CD4-positive, alpha-beta memory T cell (primary cell): ENCODE measurements at regions of chr18 and their contacts with region 1.

Region 1: DNA sequence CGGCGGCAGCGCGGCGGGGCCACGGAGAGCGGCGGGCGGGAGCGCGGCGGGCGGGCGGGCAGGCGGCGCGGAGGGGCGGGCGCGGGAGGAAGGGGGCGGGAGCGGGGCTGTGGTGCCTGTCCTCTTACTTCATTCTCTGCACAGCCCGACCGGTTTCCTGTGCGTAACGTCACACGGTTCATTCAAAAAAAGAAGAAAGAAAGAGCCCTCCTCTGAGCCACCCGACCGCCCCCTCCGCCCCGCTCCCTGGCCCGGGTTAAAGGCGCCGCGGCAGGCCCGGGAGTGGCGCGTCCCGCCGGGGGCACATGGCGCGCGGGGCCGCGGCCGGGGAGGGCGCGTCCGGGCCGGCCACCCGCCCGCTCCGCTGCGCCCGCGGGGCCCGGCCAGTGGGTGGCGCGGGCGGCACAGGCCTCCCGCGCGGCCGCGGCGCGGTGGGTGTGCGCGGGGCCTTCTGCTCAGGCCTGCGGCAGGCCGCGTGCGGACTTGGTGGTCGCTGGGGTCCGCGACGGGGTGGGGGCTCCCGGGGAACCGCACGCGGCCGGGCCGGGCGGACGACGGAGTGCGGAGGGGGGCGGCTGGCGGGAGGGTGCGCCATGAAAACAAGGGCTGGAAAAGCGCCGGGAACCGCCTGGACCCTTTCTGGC is 599 bp upstream of the BCL2 start:
- DNase-seq: peak; percentile 88 to 95 (median 91)
- H3K4me3 ChIP-seq: peak overlapping the region in 1 of 2 donors; percentile 48
- H3K4me3 Mint-ChIP-seq: peak overlapping the region; percentile 86 to 99 (median 90)
- H3K27ac ChIP-seq: peak overlapping the region; percentile 58
- H3K27ac Mint-ChIP-seq: peak overlapping the region; percentile 91 to 97 (median 95)
- H3K4me1 ChIP-seq: peaks cover 32% of the 10 kb centered on the region
- H3K4me1 Mint-ChIP-seq: peaks cover 18 to 65% (median 28%) of the 10 kb centered on the region in 4 donors
- H3K27me3 ChIP-seq: no peaks in the 10 kb centered on the region
- H3K27me3 Mint-ChIP-seq: no peaks in the 10 kb centered on the region

Region 2: DNA sequence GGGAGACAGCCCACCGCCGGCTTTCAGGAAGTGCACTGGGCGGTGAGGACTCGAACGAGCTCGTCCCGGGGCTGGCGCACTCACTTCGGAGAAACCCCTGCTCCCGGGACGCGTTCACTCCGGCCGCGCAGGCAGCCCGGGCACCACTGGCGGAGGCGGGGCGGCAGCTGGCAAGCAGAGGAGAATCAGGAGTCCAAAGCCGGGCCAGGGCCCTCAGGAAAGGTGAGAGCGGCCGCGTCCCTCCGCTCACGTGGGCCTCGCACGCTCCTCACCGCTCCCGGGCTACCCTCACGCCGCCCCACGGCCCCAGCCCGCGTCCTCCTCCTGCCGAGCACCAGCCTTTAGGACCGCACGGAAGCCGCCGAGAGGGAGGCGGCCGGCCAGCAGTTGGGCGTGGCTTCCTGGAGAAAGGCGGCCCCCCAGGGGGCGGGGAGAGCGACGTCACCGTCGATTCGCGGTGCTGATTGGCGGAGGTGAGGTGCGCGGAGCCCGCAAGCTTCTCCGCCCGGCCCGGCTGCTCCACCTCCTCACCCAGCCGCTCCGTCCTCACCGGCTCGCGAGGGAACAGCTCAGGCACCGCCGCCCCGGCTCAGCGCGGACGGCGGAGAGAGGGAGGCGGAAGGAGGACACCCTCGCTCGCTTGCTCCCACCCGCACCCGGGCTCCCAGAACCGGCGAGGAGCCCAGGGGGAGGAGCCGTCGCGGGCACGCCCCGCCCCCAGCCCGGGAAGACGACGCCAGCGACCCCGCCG is 797.5 kb before region 1 on chr18 and contains the start of gene ZCCHC2:
- CTCF ChIA-PET with region 1: no interaction called
- POLR2A ChIA-PET with region 1: interaction called, 5 read pairs
- intact Hi-C with region 1: loop called (anchors 5 kb)
- DNase-seq: peak; percentile 97 to 100 (median 98)
- H3K4me3 ChIP-seq: peak within 1 kb of the TSS; percentile 38 to 98
- H3K4me3 Mint-ChIP-seq: peak within 1 kb of the TSS; percentile 90 to 99 (median 96)
- H3K27ac ChIP-seq: peak within 1 kb of the TSS; percentile 93
- H3K27ac Mint-ChIP-seq: peak within 1 kb of the TSS; percentile 80 to 96 (median 87)
- H3K4me1 ChIP-seq: peaks cover 34% of the 10 kb centered on the region
- H3K4me1 Mint-ChIP-seq: peaks cover 21 to 45% (median 32%) of the 10 kb centered on the region in 4 donors
- H3K27me3 ChIP-seq: no peaks in the 10 kb centered on the region
- H3K27me3 Mint-ChIP-seq: no peaks in the 10 kb centered on the region
- total RNA-seq, gene ZCCHC2: 51.7 to 52.2 TPM

Region 3: DNA sequence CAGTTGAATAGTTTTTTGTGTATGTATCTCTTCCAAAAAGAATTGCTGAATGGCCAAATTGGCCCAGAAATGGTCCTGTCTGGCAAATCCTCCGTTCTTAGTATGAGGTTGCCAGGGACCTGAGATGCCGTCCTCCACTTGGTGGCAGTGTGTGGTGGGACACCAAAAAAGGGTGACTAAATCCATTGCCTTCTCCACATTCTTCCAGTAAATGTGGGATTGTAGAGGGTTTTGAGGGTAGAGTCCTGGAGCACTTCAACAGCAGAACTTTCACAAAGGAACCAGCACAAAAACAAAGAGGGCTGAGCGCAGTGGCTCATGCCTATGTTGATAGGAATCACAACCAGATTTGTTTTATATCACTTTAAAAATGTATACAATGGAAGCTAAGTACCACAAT is 200.5 kb before region 1 on chr18:
- CTCF ChIA-PET with region 1: interaction called, 175 read pairs
- POLR2A ChIA-PET with region 1: no interaction called
- intact Hi-C with region 1: no loop called
- DNase-seq: no peak
- H3K4me3 ChIP-seq: no peak overlapping the region
- H3K4me3 Mint-ChIP-seq: no peak overlapping the region
- H3K27ac ChIP-seq: no peak overlapping the region
- H3K27ac Mint-ChIP-seq: peak overlapping the region in 1 of 7 donors; percentile 82
- H3K4me1 ChIP-seq: no peaks in the 10 kb centered on the region
- H3K4me1 Mint-ChIP-seq: peaks cover 3 to 9% (median 4%) of the 10 kb centered on the region in 4 donors
- H3K27me3 ChIP-seq: no peaks in the 10 kb centered on the region
- H3K27me3 Mint-ChIP-seq: peaks cover 0 to 3% of the 10 kb centered on the region in 2 donors

Region 4: GRCh38 chr18:63161761-63162195 is 158.4 kb before region 1 on chr18:
- CTCF ChIA-PET with region 1: interaction called, 139 read pairs
- POLR2A ChIA-PET with region 1: interaction called, 195 read pairs
- intact Hi-C with region 1: loop called (anchors 1 kb)
- DNase-seq: peak; percentile 79 to 97 (median 86)
- H3K4me3 ChIP-seq: peak overlapping the region; percentile 37 to 38
- H3K4me3 Mint-ChIP-seq: peak overlapping the region; percentile 68 to 93 (median 90)
- H3K27ac ChIP-seq: peak overlapping the region; percentile 97
- H3K27ac Mint-ChIP-seq: peak overlapping the region; percentile 93 to 100 (median 99)
- H3K4me1 ChIP-seq: peaks cover 90% of the 10 kb centered on the region
- H3K4me1 Mint-ChIP-seq: peaks cover 77 to 96% (median 85%) of the 10 kb centered on the region in 4 donors
- H3K27me3 ChIP-seq: no peaks in the 10 kb centered on the region
- H3K27me3 Mint-ChIP-seq: no peaks in the 10 kb centered on the region

Region 5: GRCh38 chr18:63216516-63217311 is 103.5 kb before region 1 on chr18:
- CTCF ChIA-PET with region 1: interaction called, 13 read pairs
- POLR2A ChIA-PET with region 1: interaction called, 20 read pairs
- intact Hi-C with region 1: no loop called
- DNase-seq: peak; percentile 38 to 60 (median 50)
- H3K4me3 ChIP-seq: peak overlapping the region in 1 of 2 donors; percentile 21
- H3K4me3 Mint-ChIP-seq: peak overlapping the region; percentile 67 to 84 (median 78)
- H3K27ac ChIP-seq: peak overlapping the region; percentile 55
- H3K27ac Mint-ChIP-seq: peak overlapping the region; percentile 87 to 97 (median 91)
- H3K4me1 ChIP-seq: peaks cover 88% of the 10 kb centered on the region
- H3K4me1 Mint-ChIP-seq: peaks cover 71 to 100% (median 89%) of the 10 kb centered on the region in 4 donors
- H3K27me3 ChIP-seq: no peaks in the 10 kb centered on the region
- H3K27me3 Mint-ChIP-seq: no peaks in the 10 kb centered on the region

Region 6: GRCh38 chr18:63299837-63300745 is 20.1 kb before region 1 on chr18:
- CTCF ChIA-PET with region 1: interaction called, 93 read pairs
- POLR2A ChIA-PET with region 1: interaction called, 137 read pairs
- intact Hi-C with region 1: loop called (anchors 1 kb)
- DNase-seq: peak in 2 of 5 donors; percentile 21 to 53
- H3K4me3 ChIP-seq: no peak overlapping the region
- H3K4me3 Mint-ChIP-seq: peak overlapping the region; percentile 20 to 87 (median 76)
- H3K27ac ChIP-seq: peak overlapping the region; percentile 22
- H3K27ac Mint-ChIP-seq: peak overlapping the region; percentile 87 to 96 (median 93)
- H3K4me1 ChIP-seq: peaks cover 90% of the 10 kb centered on the region
- H3K4me1 Mint-ChIP-seq: peaks cover 64 to 92% (median 73%) of the 10 kb centered on the region in 4 donors
- H3K27me3 ChIP-seq: no peaks in the 10 kb centered on the region
- H3K27me3 Mint-ChIP-seq: no peaks in the 10 kb centered on the region

Region 7: DNA sequence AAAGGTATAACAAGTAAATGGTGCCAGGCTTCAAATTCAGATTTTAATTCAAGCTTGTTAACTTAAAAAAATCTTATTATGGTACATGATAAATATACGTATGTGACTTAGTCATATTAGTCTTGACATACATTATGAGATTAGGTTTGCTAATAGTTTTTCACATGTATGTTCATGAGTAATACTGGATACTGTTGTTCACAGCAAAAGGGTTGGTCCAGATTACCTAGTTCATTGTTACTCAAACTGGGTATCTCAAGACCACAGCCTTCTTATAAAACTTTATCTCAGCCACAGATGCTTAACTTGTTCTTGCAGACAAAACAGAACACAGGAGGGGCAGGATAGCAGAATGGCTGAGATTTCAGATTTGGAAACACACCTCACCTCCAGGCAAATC is 75.3 kb after region 1 on chr18:
- CTCF ChIA-PET with region 1: no interaction called
- POLR2A ChIA-PET with region 1: no interaction called
- intact Hi-C with region 1: no loop called
- DNase-seq: no peak
- H3K4me3 ChIP-seq: no peak overlapping the region
- H3K4me3 Mint-ChIP-seq: no peak overlapping the region
- H3K27ac ChIP-seq: no peak overlapping the region
- H3K27ac Mint-ChIP-seq: no peak overlapping the region
- H3K4me1 ChIP-seq: peaks cover 13% of the 10 kb centered on the region
- H3K4me1 Mint-ChIP-seq: peaks cover 4 to 11% (median 9%) of the 10 kb centered on the region in 4 donors
- H3K27me3 ChIP-seq: no peaks in the 10 kb centered on the region
- H3K27me3 Mint-ChIP-seq: no peaks in the 10 kb centered on the region